Left ventricle myocardium superior (tissue), 1 donor: ENCODE measurements at regions of chr5 and their contacts with region 1.

Region 1: DNA sequence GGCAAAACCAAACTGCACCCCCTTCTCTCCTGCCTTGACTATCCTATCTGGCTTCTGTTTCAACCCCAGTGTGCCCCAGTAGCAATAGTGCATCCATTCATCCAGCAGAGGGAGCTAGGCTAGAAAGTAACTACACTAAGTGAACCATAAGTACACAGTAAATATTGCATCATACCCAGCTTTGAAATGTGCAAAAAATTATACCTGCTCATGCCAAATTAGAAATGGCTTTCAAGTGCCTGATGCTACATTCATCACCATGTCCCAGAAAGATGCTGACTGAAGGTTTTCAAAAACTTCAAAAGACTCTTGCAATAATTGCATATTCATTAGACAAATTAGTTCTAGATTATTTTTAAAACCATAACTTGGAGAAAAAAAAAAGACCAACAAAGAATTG is 153.5 kb downstream of the PRELID2 start:
- DNase-seq: no peak
- ATAC-seq: peak; percentile 90

Region 2: GRCh38 chr5:144203750-144204596 is 1477.7 kb before region 1 on chr5:
- intact Hi-C with region 1: loop called (anchors 10 kb)
- DNase-seq: no peak
- ATAC-seq: peak; percentile 40

Region 3: GRCh38 chr5:145484158-145484557 is 197.5 kb before region 1 on chr5:
- intact Hi-C with region 1: no loop called
- DNase-seq: no peak
- ATAC-seq: no peak

Region 4: GRCh38 chr5:145739840-145740239 is 58.2 kb after region 1 on chr5:
- intact Hi-C with region 1: no loop called
- DNase-seq: no peak
- ATAC-seq: no peak

Region 5: DNA sequence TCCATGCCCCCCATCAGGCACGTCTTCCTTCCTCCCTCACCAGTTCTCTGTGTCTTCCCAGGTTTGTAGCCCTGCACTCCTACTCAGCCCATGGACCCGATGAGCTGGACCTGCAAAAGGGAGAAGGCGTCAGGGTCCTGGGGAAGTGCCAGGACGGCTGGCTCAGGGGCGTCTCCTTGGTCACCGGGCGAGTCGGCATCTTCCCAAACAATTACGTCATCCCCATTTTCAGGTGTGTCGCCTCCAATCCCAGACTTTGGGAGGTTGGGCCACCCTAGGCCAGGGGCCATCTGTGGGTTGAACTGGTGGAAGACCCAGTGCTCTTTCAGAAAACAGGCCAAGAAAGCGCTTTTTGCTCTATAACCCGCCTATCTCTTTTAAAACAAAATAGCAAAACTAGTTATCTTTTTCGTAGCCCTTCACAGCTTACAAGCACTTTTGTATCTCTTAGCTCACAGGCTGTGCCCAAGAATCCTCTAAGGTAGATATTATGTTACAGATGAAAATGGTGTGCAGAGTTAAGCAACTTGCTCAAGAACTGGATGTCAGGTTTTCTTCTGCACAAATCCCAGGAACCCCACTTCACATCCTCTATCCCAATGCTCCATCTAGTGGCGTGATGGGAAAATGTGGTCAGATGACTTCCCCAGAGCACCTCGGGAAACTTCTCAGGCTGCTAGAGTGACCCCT is 367.5 kb after region 1 on chr5:
- intact Hi-C with region 1: loop called (anchors 10 kb)
- DNase-seq: no peak
- ATAC-seq: peak; percentile 57